ENCODE measurements at regions of chr18 and their contacts with region 1.

Region 1: DNA sequence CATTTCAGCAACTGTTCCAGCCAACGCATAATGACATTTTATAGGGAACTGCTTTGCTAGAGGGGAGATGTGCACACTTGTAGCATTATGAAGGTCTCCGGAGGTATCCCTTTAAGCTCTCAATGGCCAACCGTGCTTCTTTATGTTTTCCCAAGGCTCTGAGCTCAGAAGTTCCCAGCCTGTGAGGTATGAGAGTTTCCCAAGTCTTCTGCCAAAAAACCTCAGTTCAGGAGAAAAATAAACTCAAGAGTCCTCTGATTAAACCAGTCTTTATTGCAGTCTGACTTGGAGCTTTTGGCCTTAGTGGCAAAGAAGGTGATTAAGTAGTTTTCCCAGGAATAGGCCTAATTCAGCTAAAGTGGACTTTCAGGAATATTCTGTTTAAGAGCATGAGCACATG is 35.4 kb upstream of the ZNF532 start:
- DNase-seq: no peak
- H3K4me3 ChIP-seq: no peak overlapping the region
- H3K27ac ChIP-seq: no peak overlapping the region
- H3K4me1 ChIP-seq: peaks cover 2% of the 10 kb centered on the region
- H3K27me3 ChIP-seq: no peaks in the 10 kb centered on the region
- CTCF ChIP-seq: no peak

Region 2: DNA sequence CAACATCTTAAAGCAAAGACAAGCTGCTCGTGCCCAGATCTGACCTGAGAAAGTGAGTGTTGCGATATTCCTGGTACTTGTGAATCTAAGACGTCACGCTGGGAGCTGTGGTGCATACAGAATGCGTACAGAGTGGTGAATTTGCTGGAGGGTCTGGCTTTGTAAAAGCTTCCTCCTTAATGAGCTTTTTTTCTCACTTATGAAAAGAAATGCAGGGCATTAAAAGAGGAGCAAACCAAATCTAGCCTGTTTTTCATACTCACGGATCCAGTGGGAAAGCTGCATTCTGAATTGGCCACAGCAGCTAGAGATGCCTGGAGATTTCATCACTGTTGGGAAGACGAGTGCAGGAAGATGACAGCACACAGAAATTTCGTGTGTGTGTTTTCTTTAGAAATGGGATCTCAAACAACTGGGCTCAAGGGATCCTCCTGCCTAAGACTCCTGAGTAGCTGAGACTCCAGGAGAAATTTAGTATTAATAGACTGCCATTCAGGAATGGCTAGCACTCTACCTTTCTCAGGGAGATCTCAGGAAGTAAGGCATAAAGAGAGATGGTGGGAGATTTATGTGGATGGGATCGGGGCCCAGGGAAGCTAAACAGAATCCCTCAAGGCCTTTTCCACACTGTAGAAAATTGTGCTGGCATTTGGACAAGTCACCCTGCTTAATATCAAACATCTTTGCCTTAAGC is 381.7 kb before region 1 on chr18:
- CTCF ChIA-PET with region 1: no interaction called
- POLR2A ChIA-PET with region 1: no interaction called
- intact Hi-C with region 1: no loop called
- DNase-seq: no peak
- H3K4me3 ChIP-seq: no peak overlapping the region
- H3K27ac ChIP-seq: no peak overlapping the region
- H3K4me1 ChIP-seq: no peaks in the 10 kb centered on the region
- H3K27me3 ChIP-seq: no peaks in the 10 kb centered on the region
- CTCF ChIP-seq: no peak

Region 3: DNA sequence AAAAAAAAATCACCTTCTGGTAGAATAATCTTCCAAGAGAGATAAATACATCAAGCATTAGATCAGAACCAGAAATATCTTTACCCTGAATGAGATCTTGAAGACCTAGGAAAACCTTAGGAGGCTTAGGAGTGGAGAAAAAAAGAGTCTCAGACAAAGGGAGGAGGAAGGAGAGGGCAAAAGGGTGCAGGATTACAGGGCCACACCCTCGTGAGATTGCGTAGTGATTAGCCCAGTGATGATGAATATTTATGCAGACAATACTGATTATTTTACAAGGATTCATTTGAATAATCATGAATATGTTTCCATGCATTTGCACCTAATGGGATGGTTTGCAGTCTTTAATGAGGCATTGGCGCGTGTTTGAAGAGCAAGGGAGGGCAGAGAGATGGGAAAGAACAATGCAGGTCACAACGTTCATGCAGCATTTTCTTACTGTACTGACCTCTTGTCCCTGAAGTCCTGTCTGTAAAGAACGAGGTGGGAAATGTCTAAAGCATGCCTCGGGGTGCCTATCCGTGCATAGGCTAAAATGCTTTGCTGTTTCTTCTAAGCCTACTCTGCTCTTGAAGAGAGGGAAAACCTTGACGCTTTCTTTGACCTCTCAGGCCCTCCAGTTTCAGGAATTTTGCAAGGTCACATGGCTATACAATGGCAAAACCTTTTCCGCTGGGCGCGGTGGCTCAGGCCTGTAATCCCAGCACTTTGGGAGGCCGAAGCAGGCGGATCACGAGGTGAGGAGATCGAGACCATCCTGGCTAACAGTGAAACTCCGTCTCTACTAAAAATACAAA is 16.9 kb after region 1 on chr18:
- CTCF ChIA-PET with region 1: no interaction called
- POLR2A ChIA-PET with region 1: interaction called, 10 read pairs
- intact Hi-C with region 1: no loop called
- DNase-seq: no peak
- H3K4me3 ChIP-seq: no peak overlapping the region
- H3K27ac ChIP-seq: no peak overlapping the region
- H3K4me1 ChIP-seq: peaks cover 59% of the 10 kb centered on the region
- H3K27me3 ChIP-seq: no peaks in the 10 kb centered on the region
- CTCF ChIP-seq: no peak

Region 4: DNA sequence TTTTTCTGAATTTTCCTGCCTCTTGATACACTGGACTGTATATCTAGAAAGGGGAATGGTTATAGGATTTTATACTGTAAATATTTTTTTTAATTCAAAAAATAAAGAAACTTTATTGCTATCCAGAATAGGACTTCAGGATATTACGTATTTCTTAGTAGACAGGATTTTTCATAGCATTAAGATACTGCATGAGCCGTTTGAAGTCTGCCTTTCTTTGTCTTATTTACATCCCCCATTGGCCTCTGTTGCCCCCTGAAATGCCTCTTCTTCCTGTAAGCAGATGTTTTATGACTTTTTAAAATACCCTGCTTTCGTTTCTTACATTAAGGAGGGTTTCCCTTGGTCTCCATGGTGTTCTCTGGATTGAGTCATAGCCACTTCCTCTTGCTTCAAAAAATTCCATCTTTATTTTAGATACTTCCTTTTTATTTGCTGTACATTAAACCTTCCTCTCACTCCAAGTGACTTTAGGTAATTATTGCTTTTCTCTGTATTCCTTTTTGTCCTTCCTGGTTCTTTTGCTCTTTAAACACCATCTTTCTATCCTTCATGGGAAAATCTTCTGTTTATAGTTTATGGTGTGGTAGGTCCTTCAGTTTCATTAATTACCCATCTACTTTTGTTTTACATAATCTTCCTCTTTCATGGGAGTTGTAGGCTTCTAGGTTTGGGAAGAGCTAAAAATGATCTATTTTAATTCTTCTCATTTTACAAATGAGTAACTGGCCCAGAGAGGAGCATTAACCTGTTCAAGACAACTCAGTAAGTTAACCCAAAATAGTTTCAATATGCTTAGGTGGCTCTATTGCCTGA is 108.0 kb after region 1 on chr18:
- CTCF ChIA-PET with region 1: no interaction called
- POLR2A ChIA-PET with region 1: no interaction called
- intact Hi-C with region 1: no loop called
- DNase-seq: peak; percentile 82
- H3K4me3 ChIP-seq: no peak overlapping the region
- H3K27ac ChIP-seq: peak overlapping the region; percentile 90
- H3K4me1 ChIP-seq: peaks cover 67% of the 10 kb centered on the region
- H3K27me3 ChIP-seq: no peaks in the 10 kb centered on the region
- CTCF ChIP-seq: no peak

Region 5: GRCh38 chr18:59040770-59041148 is 211.5 kb after region 1 on chr18:
- CTCF ChIA-PET with region 1: no interaction called
- POLR2A ChIA-PET with region 1: interaction called, 14 read pairs
- intact Hi-C with region 1: no loop called
- DNase-seq: no peak
- H3K4me3 ChIP-seq: no peak overlapping the region
- H3K27ac ChIP-seq: no peak overlapping the region
- H3K4me1 ChIP-seq: peaks cover 23% of the 10 kb centered on the region
- H3K27me3 ChIP-seq: no peaks in the 10 kb centered on the region
- CTCF ChIP-seq: no peak

Region 6: DNA sequence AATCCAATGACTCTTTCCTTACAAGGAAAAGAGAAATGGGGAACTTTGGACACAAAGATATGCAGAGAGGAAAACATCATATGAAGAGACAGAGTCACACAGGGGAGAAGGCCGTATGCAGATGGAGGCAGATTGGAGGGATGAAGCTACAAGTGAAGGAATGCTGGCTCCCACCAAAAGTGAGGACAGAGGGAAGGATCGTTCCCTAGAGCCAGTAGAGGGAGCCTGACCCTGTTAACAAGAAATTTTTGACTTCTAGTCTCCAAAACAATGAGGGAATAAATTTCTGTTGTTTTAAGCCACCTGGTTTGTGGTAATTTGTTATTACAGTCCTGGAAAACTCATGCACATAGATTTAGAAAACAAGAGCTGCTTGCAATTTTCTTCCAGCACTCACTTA is 1239.9 kb after region 1 on chr18:
- CTCF ChIA-PET with region 1: no interaction called
- POLR2A ChIA-PET with region 1: no interaction called
- intact Hi-C with region 1: no loop called
- DNase-seq: no peak
- H3K4me3 ChIP-seq: no peak overlapping the region
- H3K27ac ChIP-seq: no peak overlapping the region
- H3K4me1 ChIP-seq: no peaks in the 10 kb centered on the region
- H3K27me3 ChIP-seq: no peaks in the 10 kb centered on the region
- CTCF ChIP-seq: peak; percentile 32; the same call in 1 of the 2 replicates